ENCODE measurements at regions of chr1 and their contacts with region 1.

Region 1: GRCh38 chr1:236550961-236551851 is 27.4 kb downstream of the LGALS8 start:
- DNase-seq: no peak
- ATAC-seq: no peak
- H3K4me3 ChIP-seq: no peak overlapping the region
- H3K4me3 Mint-ChIP-seq: no peak overlapping the region
- H3K27ac ChIP-seq: no peak overlapping the region
- H3K27ac Mint-ChIP-seq: peak overlapping the region; percentile 11 to 20
- H3K4me1 ChIP-seq: peaks cover 0 to 3% of the 10 kb centered on the region in 2 experiments
- H3K4me1 Mint-ChIP-seq: peaks cover 5 to 14% (median 10%) of the 10 kb centered on the region in 3 donors
- H3K27me3 ChIP-seq: no peaks in the 10 kb centered on the region
- H3K27me3 Mint-ChIP-seq: no peaks in the 10 kb centered on the region

Region 2: GRCh38 chr1:236706183-236706582 is 155.0 kb after region 1 on chr1:
- CTCF ChIA-PET with region 1: no interaction called
- POLR2A ChIA-PET with region 1: interaction called in 1 of 2 experiments, 10 read pairs
- DNase-seq: no peak
- ATAC-seq: no peak
- H3K4me3 ChIP-seq: no peak overlapping the region
- H3K4me3 Mint-ChIP-seq: no peak overlapping the region
- H3K27ac ChIP-seq: no peak overlapping the region
- H3K27ac Mint-ChIP-seq: no peak overlapping the region
- H3K4me1 ChIP-seq: no peaks in the 10 kb centered on the region
- H3K4me1 Mint-ChIP-seq: no peaks in the 10 kb centered on the region
- H3K27me3 ChIP-seq: peaks cover 2 to 8% of the 10 kb centered on the region in 2 experiments
- H3K27me3 Mint-ChIP-seq: peaks cover 21 to 25% of the 10 kb centered on the region in 2 donors